IMR-90 (cell line): ENCODE measurements at regions of chr2 and their contacts with region 1.

Region 1: DNA sequence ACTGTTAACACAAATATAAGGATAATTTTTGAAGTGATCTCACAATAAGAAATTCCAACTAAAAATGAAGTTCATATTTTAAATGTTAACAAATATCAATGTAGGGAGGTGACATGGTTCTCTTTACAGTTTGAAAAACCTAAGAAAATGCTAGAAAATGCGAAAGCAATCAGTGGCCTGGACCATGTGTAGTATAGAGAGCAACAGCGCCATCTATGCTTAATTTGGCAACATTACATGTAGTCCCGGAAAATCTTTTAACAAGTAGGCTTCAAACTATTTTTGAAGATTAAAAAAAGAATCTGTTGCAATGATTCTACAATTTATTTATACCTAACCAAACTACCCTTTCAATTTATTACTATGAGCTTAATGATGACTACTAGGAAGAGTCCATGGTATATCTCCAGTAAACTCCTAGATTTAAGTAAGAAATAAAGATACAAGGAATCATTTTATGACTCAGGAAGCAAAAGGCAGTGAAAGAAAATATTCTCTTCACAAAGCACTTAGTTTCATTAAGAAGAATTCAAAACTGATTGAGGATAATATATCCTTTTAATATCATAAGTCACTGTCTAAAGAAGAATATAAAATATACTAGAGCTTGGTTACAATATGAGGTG is 33.3 kb downstream of the NDUFA10 start:
- DNase-seq: peak; percentile 68
- ATAC-seq: peak; percentile 91
- H3K4me3 ChIP-seq: no peak overlapping the region
- H3K27ac ChIP-seq: no peak overlapping the region
- H3K4me1 ChIP-seq: no peaks in the 10 kb centered on the region
- H3K27me3 ChIP-seq: no peaks in the 10 kb centered on the region
- CTCF ChIP-seq: peak; percentile 87
- POLR2A ChIP-seq: no peak
- RAD21 ChIP-seq: peak; percentile 83

Region 2: GRCh38 chr2:238847841-238848690 is 1143.7 kb before region 1 on chr2 and contains the start of gene TWIST2:
- CTCF ChIA-PET with region 1: no interaction called
- POLR2A ChIA-PET with region 1: no interaction called
- dilution Hi-C with region 1: no loop called
- in situ Hi-C with region 1: no loop called
- intact Hi-C with region 1: loop called (anchors 5 kb)
- DNase-seq: peak; percentile 91
- ATAC-seq: peak; percentile 84
- H3K4me3 ChIP-seq: peak within 1 kb of the TSS; percentile 90
- H3K27ac ChIP-seq: peak within 1 kb of the TSS; percentile 95
- H3K4me1 ChIP-seq: peaks cover 17% of the 10 kb centered on the region
- H3K27me3 ChIP-seq: no peaks in the 10 kb centered on the region
- CTCF ChIP-seq: no peak; the same call in 1 of the 2 replicates
- POLR2A ChIP-seq: peak; percentile 79
- RAD21 ChIP-seq: no peak; the same call in 1 of the 2 replicates
- total RNA-seq, gene TWIST2: 9.3 and 14.7 TPM in 2 replicates

Region 3: DNA sequence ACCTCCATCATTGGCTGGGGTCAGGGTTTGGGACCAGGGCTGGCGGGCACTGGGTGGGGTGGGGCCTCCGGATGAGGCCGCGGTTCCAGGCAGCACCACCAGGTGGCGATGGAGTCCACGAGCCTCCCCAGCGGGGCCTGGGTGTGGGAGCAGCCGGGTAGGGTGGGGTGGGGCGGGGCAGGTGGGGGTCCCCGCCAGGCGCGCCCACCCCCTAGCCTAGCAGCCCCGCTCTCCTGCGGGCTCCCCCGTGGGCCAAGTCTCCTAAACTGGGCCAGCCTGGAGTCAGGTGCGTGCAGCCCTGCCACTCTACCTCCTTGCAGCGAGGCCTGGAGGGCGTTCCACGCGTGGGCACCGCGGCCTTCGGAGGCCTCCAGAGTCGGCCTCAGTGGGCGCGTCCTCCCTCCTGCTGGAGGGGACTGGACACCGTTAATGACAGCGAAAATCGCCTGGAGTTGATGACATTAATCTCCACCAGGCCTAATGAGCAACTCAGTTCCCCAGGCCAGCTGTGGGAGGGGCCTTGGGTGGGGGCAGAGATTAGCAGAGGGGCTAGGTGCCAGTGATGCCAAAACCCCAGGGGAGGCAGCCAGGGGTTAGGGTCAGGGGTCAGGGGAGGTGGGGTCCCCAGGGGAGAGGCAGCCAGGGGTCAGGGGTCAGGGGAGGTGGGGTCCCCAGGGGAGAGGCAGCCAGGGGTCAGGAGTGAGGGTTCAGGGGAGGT is 956.3 kb before region 1 on chr2:
- CTCF ChIA-PET with region 1: interaction called, 3 read pairs
- POLR2A ChIA-PET with region 1: no interaction called
- dilution Hi-C with region 1: no loop called
- in situ Hi-C with region 1: no loop called
- intact Hi-C with region 1: loop called (anchors 2 kb)
- DNase-seq: no peak
- ATAC-seq: peak; percentile 99
- H3K4me3 ChIP-seq: no peak overlapping the region
- H3K27ac ChIP-seq: no peak overlapping the region
- H3K4me1 ChIP-seq: no peaks in the 10 kb centered on the region
- H3K27me3 ChIP-seq: peaks cover 12% of the 10 kb centered on the region
- CTCF ChIP-seq: peak; percentile 68
- POLR2A ChIP-seq: no peak
- RAD21 ChIP-seq: peak; percentile 74

Region 4: GRCh38 chr2:239055756-239056493 is 935.9 kb before region 1 on chr2:
- CTCF ChIA-PET with region 1: no interaction called
- POLR2A ChIA-PET with region 1: no interaction called
- dilution Hi-C with region 1: no loop called
- in situ Hi-C with region 1: loop called (anchors 10 kb)
- intact Hi-C with region 1: no loop called
- DNase-seq: no peak
- ATAC-seq: no peak
- H3K4me3 ChIP-seq: no peak overlapping the region
- H3K27ac ChIP-seq: no peak overlapping the region
- H3K4me1 ChIP-seq: no peaks in the 10 kb centered on the region
- H3K27me3 ChIP-seq: no peaks in the 10 kb centered on the region
- CTCF ChIP-seq: no peak
- POLR2A ChIP-seq: no peak
- RAD21 ChIP-seq: no peak

Region 5: DNA sequence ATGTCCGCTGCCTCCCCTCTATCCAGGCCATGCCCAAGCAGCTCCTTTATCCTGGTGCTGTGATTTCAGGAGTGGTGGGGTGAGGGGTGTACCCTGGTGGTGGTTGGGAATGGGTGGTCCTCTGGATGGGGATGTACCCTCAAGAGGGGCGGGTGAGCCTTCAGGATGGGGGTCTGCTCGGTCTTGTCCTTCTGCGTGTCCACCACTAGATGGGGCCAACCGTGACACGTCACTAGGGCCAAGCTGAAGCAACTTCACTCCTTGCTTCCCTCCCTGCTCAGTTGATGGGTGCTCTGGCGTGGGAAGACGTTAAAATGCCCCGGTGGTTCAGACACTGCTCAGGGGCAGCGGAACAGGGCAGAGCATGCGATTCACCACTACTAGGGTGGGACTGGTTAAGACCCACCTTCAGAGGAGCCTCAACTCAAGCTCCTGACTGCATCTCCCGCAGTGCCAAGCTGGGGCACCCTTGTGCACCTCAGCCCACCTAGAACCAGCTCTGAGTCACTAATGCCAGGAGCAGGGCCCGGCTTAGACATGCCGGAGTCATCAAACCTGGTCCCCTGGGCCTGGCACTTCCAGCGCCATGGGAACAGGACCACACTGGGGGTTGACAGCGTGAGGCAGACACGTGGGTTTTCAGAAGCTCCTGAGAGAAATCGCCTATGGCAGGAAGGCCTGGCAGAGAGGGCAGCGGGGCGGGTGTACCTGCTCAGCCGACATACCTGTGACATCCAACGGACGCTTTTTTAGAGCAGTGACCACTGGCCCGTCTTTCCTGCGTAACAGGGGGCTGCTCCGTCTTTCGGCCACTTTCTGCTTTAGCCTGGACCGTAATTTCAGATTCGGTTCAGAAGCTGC is 847.7 kb before region 1 on chr2:
- CTCF ChIA-PET with region 1: interaction called, 4 read pairs
- POLR2A ChIA-PET with region 1: no interaction called
- dilution Hi-C with region 1: no loop called
- in situ Hi-C with region 1: loop called (anchors 25 kb)
- intact Hi-C with region 1: loop called (anchors 5 kb)
- DNase-seq: peak; percentile 53
- ATAC-seq: peak; percentile 98
- H3K4me3 ChIP-seq: no peak overlapping the region
- H3K27ac ChIP-seq: no peak overlapping the region
- H3K4me1 ChIP-seq: no peaks in the 10 kb centered on the region
- H3K27me3 ChIP-seq: no peaks in the 10 kb centered on the region
- CTCF ChIP-seq: peak; percentile 59
- POLR2A ChIP-seq: no peak
- RAD21 ChIP-seq: peak; percentile 73

Region 6: DNA sequence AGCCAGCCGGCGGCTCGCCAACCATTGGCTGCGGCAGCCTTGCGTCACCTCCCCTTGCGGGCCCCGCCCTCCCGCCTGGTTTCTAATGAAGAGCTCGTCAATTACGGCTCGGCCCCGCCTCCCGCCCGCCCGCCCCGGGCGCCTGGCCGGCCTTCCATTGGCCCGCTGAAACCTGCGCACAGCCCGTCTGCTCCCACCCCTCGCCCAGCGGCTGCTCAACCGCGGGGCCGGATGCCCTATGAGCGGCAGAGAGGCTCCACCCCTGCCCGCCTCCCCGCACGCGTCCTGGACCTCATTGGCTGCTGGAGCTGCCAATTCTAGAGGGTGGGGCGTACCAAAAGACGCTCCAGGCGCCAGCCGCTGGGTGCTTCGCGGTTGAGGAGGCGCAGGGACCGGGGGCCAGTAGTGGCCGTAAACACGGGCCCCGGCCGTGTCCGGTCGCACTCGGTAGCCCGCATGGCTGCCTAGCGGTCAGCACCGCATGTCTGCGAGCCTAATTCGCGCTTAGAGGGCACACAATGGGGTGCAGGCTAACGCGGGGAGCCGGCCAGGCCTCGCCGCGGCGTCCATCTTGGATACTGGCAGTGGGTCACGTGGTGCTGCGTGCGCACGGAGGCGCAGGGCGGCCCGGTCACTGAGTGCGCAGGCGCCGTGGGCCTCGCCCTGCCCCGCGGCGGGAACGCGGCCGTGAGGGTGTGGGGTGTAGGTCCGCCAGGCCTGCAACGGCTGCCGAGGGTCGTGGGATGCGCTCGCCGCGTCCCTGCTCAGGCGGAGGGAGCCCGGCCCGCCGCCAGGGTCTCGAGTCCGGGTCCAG is 590.5 kb before region 1 on chr2:
- CTCF ChIA-PET with region 1: no interaction called
- POLR2A ChIA-PET with region 1: no interaction called
- dilution Hi-C with region 1: no loop called
- in situ Hi-C with region 1: no loop called
- intact Hi-C with region 1: loop called (anchors 10 kb)
- DNase-seq: peak; percentile 98
- ATAC-seq: peak; percentile 96
- H3K4me3 ChIP-seq: peak overlapping the region; percentile 94
- H3K27ac ChIP-seq: peak overlapping the region; percentile 98
- H3K4me1 ChIP-seq: peaks cover 5% of the 10 kb centered on the region; the same call in 1 of the 2 replicates
- H3K27me3 ChIP-seq: no peaks in the 10 kb centered on the region
- CTCF ChIP-seq: no peak
- POLR2A ChIP-seq: peak; percentile 96
- RAD21 ChIP-seq: no peak

Region 7: GRCh38 chr2:239934571-239935171 is 57.1 kb before region 1 on chr2:
- CTCF ChIA-PET with region 1: no interaction called
- POLR2A ChIA-PET with region 1: no interaction called
- dilution Hi-C with region 1: no loop called
- in situ Hi-C with region 1: no loop called
- intact Hi-C with region 1: loop called (anchors 2 kb)
- DNase-seq: peak; percentile 39
- ATAC-seq: peak; percentile 81
- H3K4me3 ChIP-seq: no peak overlapping the region
- H3K27ac ChIP-seq: no peak overlapping the region
- H3K4me1 ChIP-seq: no peaks in the 10 kb centered on the region
- H3K27me3 ChIP-seq: no peaks in the 10 kb centered on the region
- CTCF ChIP-seq: peak; percentile 47
- POLR2A ChIP-seq: no peak
- RAD21 ChIP-seq: no peak

Region 8: DNA sequence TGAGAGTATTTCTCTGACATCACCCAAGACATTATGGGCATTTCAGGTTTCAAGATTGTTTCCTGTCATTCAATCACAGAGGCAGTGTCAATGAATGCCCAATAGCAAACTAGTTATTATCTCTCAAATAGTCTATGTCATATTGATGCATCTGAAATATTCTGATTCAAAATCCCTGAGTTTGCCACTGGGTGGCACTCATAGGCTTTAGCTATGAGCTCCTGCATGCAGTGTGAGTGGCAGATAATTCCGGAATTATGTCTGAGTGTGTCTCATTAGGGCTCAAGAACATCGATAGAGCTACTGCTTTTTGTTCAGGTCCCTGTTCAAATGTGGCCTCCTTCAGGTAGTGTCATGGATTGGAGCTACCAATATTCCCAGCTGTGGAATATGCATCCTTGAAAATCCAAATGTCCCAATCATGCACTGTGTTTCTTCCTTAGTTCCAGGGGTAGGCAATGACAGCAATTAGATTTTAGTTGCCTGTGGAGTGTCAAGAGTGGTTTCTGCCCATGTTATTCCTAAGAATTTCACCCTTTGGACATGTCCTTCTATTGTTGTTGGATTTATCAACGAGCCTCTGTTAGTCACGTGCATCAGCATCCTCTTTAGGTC is 69.3 kb after region 1 on chr2:
- CTCF ChIA-PET with region 1: no interaction called
- POLR2A ChIA-PET with region 1: no interaction called
- dilution Hi-C with region 1: no loop called
- in situ Hi-C with region 1: no loop called
- intact Hi-C with region 1: no loop called
- DNase-seq: peak; percentile 57
- ATAC-seq: peak; percentile 96
- H3K4me3 ChIP-seq: no peak overlapping the region
- H3K27ac ChIP-seq: no peak overlapping the region
- H3K4me1 ChIP-seq: no peaks in the 10 kb centered on the region
- H3K27me3 ChIP-seq: peaks cover 16% of the 10 kb centered on the region
- CTCF ChIP-seq: peak; percentile 69
- POLR2A ChIP-seq: no peak
- RAD21 ChIP-seq: peak; percentile 72